CD4-positive, alpha-beta T cell (primary cell): ENCODE measurements at regions of chr5 and their contacts with region 1.

Region 1: DNA sequence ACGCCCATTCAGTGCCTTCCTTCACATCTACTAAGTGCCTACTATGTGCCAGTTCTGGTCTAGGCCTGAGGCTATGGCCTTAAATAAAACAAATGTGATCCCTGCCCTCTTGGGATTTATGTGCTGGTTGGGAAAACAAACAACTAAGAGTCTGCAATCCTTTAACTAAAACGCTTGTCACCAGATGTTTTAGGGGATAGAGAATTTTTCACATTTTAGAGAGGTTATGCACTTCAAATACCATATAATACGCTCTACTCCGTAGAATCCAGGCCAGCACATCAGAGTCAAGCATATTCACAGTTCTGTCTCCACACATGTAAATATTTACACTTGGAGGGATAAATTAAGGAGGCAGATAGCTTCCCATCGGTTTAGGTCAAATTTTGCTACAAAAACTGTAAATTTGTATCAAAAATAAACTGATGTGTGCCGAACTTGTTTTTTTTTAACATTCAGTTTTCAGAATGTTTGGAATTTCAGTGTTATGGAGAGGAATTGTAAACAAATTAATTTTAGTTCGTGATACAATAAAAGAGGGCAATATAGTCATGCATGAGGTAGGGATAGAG is 22.0 kb upstream of the ADRA1B start:
- DNase-seq: no peak
- ATAC-seq: no peak
- H3K4me3 ChIP-seq: no peak overlapping the region
- H3K4me3 Mint-ChIP-seq: no peak overlapping the region
- H3K27ac ChIP-seq: no peak overlapping the region
- H3K27ac Mint-ChIP-seq: no peak overlapping the region
- H3K4me1 ChIP-seq: no peaks in the 10 kb centered on the region
- H3K4me1 Mint-ChIP-seq: no peaks in the 10 kb centered on the region
- H3K27me3 ChIP-seq: peaks cover 0 to 4% of the 10 kb centered on the region in 2 experiments
- H3K27me3 Mint-ChIP-seq: peaks cover 36% of the 10 kb centered on the region
- CTCF ChIP-seq: no peak

Region 2: GRCh38 chr5:159850160-159850559 is 44.1 kb before region 1 on chr5:
- CTCF ChIA-PET with region 1: no interaction called
- POLR2A ChIA-PET with region 1: no interaction called
- intact Hi-C with region 1: loop called in 1 of 2 experiments (anchors 2 kb)
- DNase-seq: no peak
- ATAC-seq: no peak
- H3K4me3 ChIP-seq: no peak overlapping the region
- H3K4me3 Mint-ChIP-seq: no peak overlapping the region
- H3K27ac ChIP-seq: no peak overlapping the region
- H3K27ac Mint-ChIP-seq: no peak overlapping the region
- H3K4me1 ChIP-seq: no peaks in the 10 kb centered on the region
- H3K4me1 Mint-ChIP-seq: no peaks in the 10 kb centered on the region
- H3K27me3 ChIP-seq: no peaks in the 10 kb centered on the region
- H3K27me3 Mint-ChIP-seq: peaks cover 3% of the 10 kb centered on the region
- CTCF ChIP-seq: no peak

Region 3: DNA sequence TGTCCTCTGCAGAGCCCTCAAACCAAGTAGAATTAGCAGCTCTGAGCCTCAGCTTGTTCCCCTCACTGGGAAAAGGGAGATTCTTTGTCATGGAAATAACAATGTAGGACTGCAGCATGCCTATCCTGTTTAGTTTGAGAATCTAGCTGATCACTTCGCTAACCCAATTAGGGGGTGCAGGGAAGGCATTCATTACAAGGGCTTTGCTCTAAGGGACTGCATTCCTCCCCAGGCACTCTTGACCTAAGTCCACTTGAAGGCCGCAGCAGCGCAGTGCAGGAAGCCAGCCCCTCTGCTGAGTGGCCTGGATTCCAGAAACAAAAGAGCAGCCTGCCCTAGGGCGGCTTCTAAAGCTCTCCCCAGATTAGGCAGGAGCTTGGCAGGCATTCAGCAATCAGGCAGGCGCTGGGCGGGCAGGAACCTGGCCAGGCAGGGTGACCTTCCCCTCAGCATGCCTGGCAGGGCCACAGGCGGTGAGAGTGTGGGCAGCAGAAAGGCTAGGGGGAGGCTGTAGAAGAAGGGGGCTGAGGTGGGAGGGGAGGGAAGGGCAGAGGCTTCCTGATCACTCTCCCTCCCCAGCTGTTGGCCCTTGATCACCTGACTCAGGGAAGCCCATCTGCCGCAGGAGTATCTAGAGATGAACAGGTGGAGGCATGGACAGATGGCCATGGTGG is 393.3 kb after region 1 on chr5:
- CTCF ChIA-PET with region 1: no interaction called
- POLR2A ChIA-PET with region 1: no interaction called
- intact Hi-C with region 1: no loop called
- DNase-seq: no peak
- ATAC-seq: no peak
- H3K4me3 ChIP-seq: no peak overlapping the region
- H3K4me3 Mint-ChIP-seq: no peak overlapping the region
- H3K27ac ChIP-seq: no peak overlapping the region
- H3K27ac Mint-ChIP-seq: no peak overlapping the region
- H3K4me1 ChIP-seq: no peaks in the 10 kb centered on the region
- H3K4me1 Mint-ChIP-seq: no peaks in the 10 kb centered on the region
- H3K27me3 ChIP-seq: peaks cover 0 to 2% of the 10 kb centered on the region in 2 experiments
- H3K27me3 Mint-ChIP-seq: no peaks in the 10 kb centered on the region
- CTCF ChIP-seq: no peak